Activated T-helper 1 cell treated with anti-CD3 and anti-CD28 coated beads, Interleukin-12 subunit alpha, Interleukin-12 subunit beta, Interleukin-2, Interleukin-4 antibody, amounts not matched to agents 30 ng/mL and 10 ng/mL and 1 ng/mL, durations not matched to agents 14 hours and 24 hours and 36 hours (primary cell): ENCODE measurements at regions of chr3 and their contacts with region 1.

Region 1: DNA sequence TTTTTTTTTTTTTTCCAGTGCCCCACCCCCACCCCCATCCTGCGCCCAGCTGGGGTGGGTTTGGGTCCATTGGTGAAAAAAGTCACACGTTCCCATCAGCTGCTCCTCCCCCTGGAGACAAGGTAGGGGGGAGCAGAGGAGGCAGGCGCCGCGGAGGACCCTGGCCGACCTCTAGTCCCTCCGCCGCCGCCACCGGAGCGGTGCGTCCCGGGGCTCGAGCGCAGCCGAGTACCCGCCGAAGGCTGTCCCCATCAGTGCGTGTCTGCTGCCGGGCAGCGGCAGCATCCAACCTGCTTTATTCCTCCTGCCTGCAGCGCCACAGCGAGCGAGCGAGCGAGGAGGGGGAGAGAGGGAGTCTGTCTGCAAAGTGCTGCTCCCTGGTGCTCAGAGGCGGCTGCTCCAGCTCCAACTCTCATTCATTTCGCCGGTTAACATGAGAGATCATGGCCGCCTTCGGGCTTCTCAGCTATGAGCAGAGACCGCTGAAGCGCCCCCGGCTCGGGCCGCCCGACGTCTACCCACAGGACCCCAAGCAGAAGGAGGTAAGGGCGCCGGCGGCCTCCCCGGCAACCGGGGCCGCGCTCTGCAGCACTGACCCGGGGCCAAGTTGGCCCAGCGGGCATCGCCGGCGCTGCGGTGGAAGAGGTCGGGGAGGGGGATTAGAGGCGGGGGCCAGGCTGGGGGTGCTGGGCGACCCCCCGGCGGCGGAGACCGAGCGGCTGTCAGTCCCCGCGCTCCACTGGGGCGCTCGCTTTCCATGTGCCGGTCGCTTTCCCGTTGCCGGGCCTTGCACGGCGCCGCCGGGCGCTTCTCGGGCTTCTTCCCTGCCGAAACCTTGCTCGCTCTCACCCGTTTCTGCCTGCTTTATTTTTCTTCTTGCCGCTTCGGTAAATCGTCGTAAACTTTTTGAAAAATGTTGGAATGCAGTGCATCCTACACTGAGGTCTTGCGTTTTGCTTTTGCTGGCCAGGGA is 1.3 kb downstream of the MED12L start:
- DNase-seq: peak; percentile 58
- H3K4me3 Mint-ChIP-seq: peak overlapping the region; percentile 85
- H3K27ac Mint-ChIP-seq: peak overlapping the region; percentile 27
- H3K4me1 Mint-ChIP-seq: peaks cover 4% of the 10 kb centered on the region
- H3K27me3 Mint-ChIP-seq: peaks cover 48% of the 10 kb centered on the region

Region 2: DNA sequence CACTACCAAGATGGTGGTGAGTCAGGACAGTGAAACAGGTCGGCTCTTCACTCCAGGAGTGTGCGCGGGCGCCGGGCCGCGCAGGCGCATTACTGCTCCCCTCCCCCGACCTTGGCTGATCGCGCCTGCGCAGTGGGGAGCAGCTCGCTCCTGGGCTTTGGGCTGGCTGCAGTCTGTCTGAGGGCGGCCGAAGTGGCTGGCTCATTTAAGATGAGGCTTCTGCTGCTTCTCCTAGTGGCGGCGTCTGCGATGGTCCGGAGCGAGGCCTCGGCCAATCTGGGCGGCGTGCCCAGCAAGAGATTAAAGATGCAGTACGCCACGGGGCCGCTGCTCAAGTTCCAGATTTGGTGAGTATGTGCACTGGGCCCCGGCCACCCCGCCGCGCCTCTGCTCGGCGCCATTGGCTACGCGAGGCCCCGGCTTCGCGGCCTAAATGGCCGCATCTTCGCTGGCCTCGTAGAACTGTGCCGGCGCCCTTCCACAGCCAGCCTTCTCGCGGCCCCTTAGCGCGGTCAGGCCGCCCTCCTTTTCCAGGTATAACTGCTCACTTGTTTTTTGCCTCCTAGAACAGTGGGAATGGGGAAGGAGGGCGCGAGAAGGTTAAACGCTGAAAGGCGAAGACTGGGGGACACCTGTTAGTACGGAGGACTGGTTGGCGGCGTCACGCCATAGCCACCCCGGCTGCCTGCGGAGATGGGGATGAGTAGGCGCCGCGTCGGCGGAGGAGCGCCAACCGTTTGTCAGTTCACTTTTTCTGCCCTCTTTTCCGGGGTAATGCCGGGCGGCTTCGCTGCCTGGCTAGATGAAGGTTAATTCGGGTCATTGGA is 483.4 kb before region 1 on chr3 and contains the start of gene SELENOT:
- intact Hi-C with region 1: loop called (anchors 5 kb)
- DNase-seq: peak; percentile 96
- H3K4me3 Mint-ChIP-seq: peak within 1 kb of the TSS; percentile 99
- H3K27ac Mint-ChIP-seq: peak within 1 kb of the TSS; percentile 99
- H3K4me1 Mint-ChIP-seq: peaks cover 80% of the 10 kb centered on the region
- H3K27me3 Mint-ChIP-seq: peaks cover 2% of the 10 kb centered on the region
- total RNA-seq, gene SELENOT: 139 and 140 TPM in 2 replicates

Region 3: GRCh38 chr3:150925751-150926201 is 161.0 kb before region 1 on chr3:
- intact Hi-C with region 1: loop called (anchors 1 kb)
- DNase-seq: peak; percentile 27
- H3K4me3 Mint-ChIP-seq: peak overlapping the region; percentile 48
- H3K27ac Mint-ChIP-seq: no peak overlapping the region
- H3K4me1 Mint-ChIP-seq: peaks cover 9% of the 10 kb centered on the region
- H3K27me3 Mint-ChIP-seq: peaks cover 20% of the 10 kb centered on the region

Region 4: DNA sequence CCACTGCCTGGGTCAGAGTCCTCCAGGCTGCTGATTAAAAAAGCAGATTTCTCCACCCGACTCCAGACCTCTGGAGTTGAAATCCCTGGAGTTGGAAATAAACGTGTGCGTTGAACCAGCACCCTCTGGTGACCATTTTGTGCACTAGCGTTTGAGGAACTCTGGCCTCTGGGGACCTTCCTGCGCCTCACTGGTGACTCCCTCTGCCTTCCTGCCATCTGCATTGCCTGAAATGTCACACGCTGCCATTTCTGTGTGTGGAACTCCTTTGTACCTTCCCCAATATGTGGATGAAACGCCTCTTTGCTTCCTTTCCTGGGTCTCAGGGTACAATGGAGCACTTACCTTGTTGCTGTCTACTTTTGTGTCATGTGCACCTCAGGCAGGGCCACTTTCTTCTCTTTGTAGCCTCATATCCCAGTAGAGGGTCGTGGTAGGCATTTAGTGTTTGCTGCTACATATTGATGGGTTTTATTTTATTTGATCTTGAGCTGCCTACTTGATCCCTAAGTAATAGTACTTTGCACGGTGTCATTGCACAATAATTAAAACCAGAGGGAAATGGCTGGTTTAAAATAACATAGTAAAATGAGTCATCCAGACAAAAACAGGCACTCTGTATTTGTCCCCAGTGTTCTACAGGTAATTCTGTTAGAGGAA is 59.4 kb after region 1 on chr3:
- intact Hi-C with region 1: loop called (anchors 1 kb)
- DNase-seq: peak; percentile 38
- H3K4me3 Mint-ChIP-seq: no peak overlapping the region
- H3K27ac Mint-ChIP-seq: no peak overlapping the region
- H3K4me1 Mint-ChIP-seq: no peaks in the 10 kb centered on the region
- H3K27me3 Mint-ChIP-seq: peaks cover 14% of the 10 kb centered on the region

Region 5: DNA sequence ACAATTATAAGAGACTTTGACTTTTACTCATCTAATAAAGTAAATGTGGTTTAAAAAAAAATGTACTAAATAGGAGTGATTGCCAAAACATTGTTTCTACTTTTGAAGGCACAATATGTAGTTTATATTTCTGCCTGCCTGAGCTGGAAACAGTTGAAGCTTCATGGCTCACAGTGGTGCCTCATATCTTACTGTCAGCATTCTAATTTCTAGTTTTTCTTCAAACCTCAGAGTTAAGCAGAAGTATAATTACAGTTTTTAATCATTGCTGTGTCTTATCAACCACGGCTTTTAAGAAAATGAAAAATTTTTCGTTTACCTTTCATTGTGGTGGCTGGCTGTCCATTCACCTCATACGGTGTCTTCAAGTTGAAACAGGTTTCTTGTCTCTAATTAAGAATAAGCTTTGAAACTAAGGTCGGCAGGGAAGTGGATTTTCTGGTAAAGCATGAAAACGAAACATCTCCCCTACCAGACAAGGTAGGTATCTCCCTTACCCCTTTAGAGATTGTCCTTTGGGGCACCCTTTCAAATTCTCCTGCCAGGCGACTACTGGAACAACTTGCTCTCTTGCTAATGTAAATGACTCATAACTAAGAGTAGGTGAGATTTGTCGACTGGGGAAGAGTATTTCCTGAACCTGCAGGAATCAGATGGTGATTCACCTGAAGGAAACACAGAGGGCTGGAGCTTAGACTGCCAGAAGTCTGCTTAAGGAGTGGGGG is 229.7 kb after region 1 on chr3 and contains the start of gene GPR87:
- intact Hi-C with region 1: no loop called
- DNase-seq: no peak
- H3K4me3 Mint-ChIP-seq: peak within 1 kb of the TSS; percentile 7
- H3K27ac Mint-ChIP-seq: peak within 1 kb of the TSS; percentile 61
- H3K4me1 Mint-ChIP-seq: peaks cover 24% of the 10 kb centered on the region
- H3K27me3 Mint-ChIP-seq: no peaks in the 10 kb centered on the region
- total RNA-seq, gene GPR87: 0.62 and 0.93 TPM in 2 replicates